ENCODE measurements at regions of chr5 and their contacts with region 1.

Region 1: DNA sequence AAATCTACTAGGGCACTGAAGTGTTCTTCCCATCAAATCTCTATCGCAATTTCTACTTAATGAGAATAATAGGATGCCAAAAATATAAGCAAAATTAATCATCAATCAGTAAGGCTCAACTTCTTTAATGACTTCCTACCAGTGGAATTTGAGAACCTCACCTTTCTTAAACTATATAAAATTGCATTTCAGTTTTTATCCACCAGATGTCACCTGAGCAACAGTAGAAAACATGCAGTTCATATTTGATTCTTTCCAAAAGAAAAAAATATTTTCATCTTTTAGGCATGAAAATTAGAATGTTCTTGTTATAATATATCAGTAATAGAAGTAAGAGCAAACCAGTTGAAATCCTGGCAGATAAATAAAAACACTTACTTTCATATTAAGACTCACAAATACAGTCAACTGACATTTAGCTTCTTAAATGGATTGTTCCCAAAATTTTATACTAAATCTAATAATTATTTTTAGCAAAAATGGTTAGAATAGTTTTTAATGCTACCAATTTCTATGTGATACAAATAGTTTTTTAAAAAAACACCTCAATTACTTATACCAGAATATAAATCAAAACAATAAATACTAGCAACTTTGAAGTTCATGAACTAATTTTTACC is 13.4 kb upstream of the CCDC112 start:
- DNase-seq: no peak
- ATAC-seq: peak; percentile 61
- H3K4me3 Mint-ChIP-seq: no peak overlapping the region
- H3K27ac Mint-ChIP-seq: no peak overlapping the region
- H3K4me1 Mint-ChIP-seq: no peaks in the 10 kb centered on the region
- H3K27me3 Mint-ChIP-seq: peaks cover 3% of the 10 kb centered on the region
- CTCF ChIP-seq: no peak

Region 2: GRCh38 chr5:115231598-115231997 is 78.3 kb before region 1 on chr5:
- CTCF ChIA-PET with region 1: no interaction called
- POLR2A ChIA-PET with region 1: no interaction called
- intact Hi-C with region 1: no loop called
- DNase-seq: no peak
- ATAC-seq: no peak
- H3K4me3 Mint-ChIP-seq: no peak overlapping the region
- H3K27ac Mint-ChIP-seq: no peak overlapping the region
- H3K4me1 Mint-ChIP-seq: peaks cover 5% of the 10 kb centered on the region
- H3K27me3 Mint-ChIP-seq: no peaks in the 10 kb centered on the region
- CTCF ChIP-seq: no peak

Region 3: GRCh38 chr5:115579747-115580173 is 269.9 kb after region 1 on chr5:
- CTCF ChIA-PET with region 1: interaction called, 134 read pairs
- POLR2A ChIA-PET with region 1: interaction called, 8 read pairs
- intact Hi-C with region 1: loop called (anchors 1 kb)
- DNase-seq: no peak
- ATAC-seq: peak; percentile 85
- H3K4me3 Mint-ChIP-seq: peak overlapping the region; percentile 74
- H3K27ac Mint-ChIP-seq: peak overlapping the region; percentile 83
- H3K4me1 Mint-ChIP-seq: peaks cover 50% of the 10 kb centered on the region
- H3K27me3 Mint-ChIP-seq: no peaks in the 10 kb centered on the region
- CTCF ChIP-seq: no peak

Region 4: GRCh38 chr5:115601701-115602590 is 292.1 kb after region 1 on chr5 and contains the start of gene TICAM2:
- CTCF ChIA-PET with region 1: interaction called, 13 read pairs
- POLR2A ChIA-PET with region 1: interaction called, 5 read pairs
- intact Hi-C with region 1: no loop called
- DNase-seq: peak; percentile 68
- ATAC-seq: peak; percentile 80
- H3K4me3 Mint-ChIP-seq: peak within 1 kb of the TSS; percentile 88
- H3K27ac Mint-ChIP-seq: peak within 1 kb of the TSS; percentile 98
- H3K4me1 Mint-ChIP-seq: peaks cover 56% of the 10 kb centered on the region
- H3K27me3 Mint-ChIP-seq: no peaks in the 10 kb centered on the region
- CTCF ChIP-seq: no peak
- total RNA-seq, gene TICAM2: 12.4 and 13.3 TPM in 2 replicates

Region 5: DNA sequence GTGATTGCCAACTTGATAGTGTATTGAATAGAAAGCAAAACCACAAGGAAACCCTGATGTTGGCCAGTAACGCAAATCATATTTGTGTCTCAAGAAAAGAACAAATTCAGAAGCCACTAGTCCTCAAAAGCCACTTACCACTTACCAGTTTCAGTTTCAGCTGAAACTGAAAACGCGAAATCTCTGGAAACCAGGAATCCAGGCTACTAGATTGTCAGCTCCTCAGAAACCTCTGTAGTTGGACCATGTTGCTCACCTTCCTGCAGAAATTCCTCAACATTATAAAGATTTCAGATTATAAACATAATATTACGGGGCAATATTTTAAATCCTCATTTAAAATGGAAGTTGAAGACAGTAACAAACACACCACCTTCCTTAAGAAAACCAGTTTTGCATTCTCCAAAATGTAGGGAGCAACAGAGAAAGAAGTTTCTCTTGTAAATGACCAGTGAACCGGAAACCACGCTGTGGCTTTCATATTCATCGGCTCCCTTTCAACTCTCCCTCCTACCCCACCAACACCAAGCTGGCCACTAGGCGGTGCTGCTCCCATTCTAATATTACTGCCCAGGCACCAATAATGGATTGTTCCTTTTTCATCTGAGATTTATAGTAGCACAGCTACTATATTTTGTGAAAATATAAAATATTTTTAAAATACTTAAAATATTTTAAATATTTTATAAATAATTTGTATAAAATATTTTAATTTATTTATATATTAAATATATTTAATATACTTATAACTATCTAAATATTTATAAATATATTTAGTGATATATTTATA is 324.7 kb after region 1 on chr5:
- CTCF ChIA-PET with region 1: interaction called, 5 read pairs
- POLR2A ChIA-PET with region 1: no interaction called
- intact Hi-C with region 1: loop called (anchors 1 kb)
- DNase-seq: peak; percentile 74
- ATAC-seq: peak; percentile 91
- H3K4me3 Mint-ChIP-seq: peak overlapping the region; percentile 41
- H3K27ac Mint-ChIP-seq: no peak overlapping the region
- H3K4me1 Mint-ChIP-seq: peaks cover 9% of the 10 kb centered on the region
- H3K27me3 Mint-ChIP-seq: peaks cover 4% of the 10 kb centered on the region
- CTCF ChIP-seq: peak; percentile 76

Region 6: GRCh38 chr5:116068028-116068632 is 758.3 kb after region 1 on chr5:
- CTCF ChIA-PET with region 1: interaction called, 10 read pairs
- POLR2A ChIA-PET with region 1: no interaction called
- intact Hi-C with region 1: loop called (anchors 1 kb)
- DNase-seq: no peak
- ATAC-seq: no peak
- H3K4me3 Mint-ChIP-seq: no peak overlapping the region
- H3K27ac Mint-ChIP-seq: no peak overlapping the region
- H3K4me1 Mint-ChIP-seq: no peaks in the 10 kb centered on the region
- H3K27me3 Mint-ChIP-seq: no peaks in the 10 kb centered on the region
- CTCF ChIP-seq: peak; percentile 84